Esophagus muscularis mucosa (tissue), 4 donors: ENCODE measurements at regions of chr3 and their contacts with region 1.

Region 1: DNA sequence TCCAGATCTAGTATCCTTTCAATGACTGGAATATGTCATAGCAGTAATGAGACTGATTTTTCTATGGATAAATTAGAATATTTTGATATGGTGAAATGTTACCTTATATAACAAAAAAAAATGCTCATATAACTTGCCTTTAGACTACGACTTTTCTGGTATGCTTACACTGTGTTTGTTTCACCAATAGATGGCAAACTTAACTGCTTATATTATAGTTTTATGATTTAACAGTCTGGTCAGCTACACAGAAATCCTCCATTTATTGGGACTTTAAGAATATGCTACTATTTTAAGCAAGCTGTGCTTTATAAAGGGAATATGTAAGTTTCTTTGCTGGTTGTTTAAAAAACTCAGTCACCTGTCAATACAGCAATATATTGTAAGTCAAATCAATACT is 205.6 kb downstream of the VGLL3 start:
- DNase-seq: no peak
- H3K4me3 ChIP-seq: no peak overlapping the region
- H3K27ac ChIP-seq: no peak overlapping the region
- H3K4me1 ChIP-seq: no peaks in the 10 kb centered on the region
- H3K27me3 ChIP-seq: no peaks in the 10 kb centered on the region
- CTCF ChIP-seq: peak; percentile 18 to 36 (median 22)
- EP300 ChIP-seq: no peak
- POLR2A ChIP-seq: no peak

Region 2: DNA sequence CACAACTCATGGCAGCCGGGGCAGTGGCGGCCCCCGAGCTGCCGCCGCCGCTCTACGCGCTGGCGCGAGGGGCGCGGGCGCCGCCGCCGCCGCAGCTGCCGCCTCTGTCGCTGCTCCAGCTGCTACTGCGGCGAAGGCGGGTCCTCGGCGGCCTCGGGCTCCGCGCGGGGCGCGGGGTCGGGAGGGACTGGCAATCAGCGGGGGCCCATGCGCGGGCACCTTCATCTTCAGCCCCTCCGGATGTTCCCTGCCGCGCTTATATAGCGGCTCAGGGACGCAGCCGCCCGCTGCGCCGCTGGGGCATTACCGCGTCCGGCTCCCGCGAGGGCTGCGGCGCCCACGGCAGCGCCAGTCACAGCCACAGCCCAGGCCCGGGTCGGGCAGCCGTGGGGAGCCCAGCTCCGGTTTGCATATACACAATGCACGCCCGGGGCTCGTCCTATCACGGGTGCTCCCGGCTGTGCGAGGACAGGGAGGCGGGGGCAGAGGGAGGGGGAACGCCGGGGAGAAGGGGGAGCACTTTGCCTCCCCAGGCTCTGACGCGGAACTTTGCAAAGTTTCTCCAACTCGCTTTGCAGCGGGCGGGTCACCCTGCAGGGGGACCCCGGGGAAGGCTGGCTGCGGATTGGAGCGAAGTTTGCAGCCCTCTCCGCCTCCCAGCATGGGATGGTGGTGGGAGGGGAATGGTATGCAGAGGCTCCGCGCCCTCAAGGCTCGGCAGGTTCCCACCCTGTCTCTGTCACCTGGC is 205.5 kb after region 1 on chr3 and contains the start of gene VGLL3:
- intact Hi-C with region 1: loop called (anchors 10 kb)
- DNase-seq: no peak
- H3K4me3 ChIP-seq: peak within 1 kb of the TSS; percentile 65 to 87 (median 74)
- H3K27ac ChIP-seq: peak within 1 kb of the TSS; percentile 86 to 91 (median 88)
- H3K4me1 ChIP-seq: peaks cover 8 to 33% (median 20%) of the 10 kb centered on the region in 4 donors
- H3K27me3 ChIP-seq: peaks cover 0 to 24% (median 5%) of the 10 kb centered on the region in 4 donors
- CTCF ChIP-seq: peak in 1 of 3 experiments; percentile 14
- EP300 ChIP-seq: no peak
- POLR2A ChIP-seq: peak; percentile 40
- total RNA-seq, gene VGLL3: 23.7 to 45.6 (median 30.5) TPM

Region 3: DNA sequence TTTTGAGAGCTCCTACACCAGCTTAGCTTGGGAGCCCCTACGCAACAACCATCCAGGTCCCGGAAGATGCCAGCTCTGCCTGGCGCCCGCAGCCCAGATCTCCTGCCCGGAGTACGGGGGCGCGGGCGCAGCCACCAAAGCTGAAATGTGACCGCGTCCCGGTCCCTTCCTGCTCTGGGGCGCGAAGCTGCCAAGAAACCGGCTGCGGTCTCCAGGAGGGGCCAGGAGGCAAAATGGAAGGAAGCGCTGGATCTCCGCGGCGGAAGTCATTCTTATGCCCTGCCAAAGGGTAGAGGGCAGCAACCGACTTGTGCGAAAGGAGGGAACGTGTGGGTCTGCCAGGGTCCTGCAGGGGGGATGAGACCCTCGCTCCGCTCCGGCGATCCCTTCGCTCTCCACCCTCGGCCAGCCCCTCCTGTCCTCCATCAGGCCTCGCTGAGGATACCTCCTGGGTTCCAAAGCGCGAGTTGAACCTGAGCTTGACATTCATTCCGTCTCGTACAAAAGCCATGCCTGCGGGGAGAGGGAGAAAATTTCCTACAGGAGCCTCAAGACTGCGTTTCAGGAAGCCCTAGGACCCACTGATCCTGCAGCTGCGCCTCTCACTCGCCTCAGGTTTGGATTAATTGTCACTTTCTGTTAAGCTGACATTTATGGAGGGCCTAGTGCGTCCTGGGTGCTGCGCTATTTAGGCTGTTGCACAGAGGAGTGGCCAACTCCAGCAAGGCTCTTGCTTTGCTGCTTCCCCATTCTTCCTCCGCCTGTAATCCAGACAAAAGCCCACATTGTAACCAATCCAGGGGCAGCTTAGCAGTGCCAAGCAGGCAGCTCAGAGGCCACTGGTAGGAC is 303.8 kb after region 1 on chr3:
- intact Hi-C with region 1: loop called (anchors 5 kb)
- DNase-seq: no peak
- H3K4me3 ChIP-seq: peak overlapping the region; percentile 56 to 78 (median 66)
- H3K27ac ChIP-seq: peak overlapping the region; percentile 68 to 81 (median 77)
- H3K4me1 ChIP-seq: peaks cover 0 to 24% (median 8%) of the 10 kb centered on the region in 4 donors
- H3K27me3 ChIP-seq: no peaks in the 10 kb centered on the region
- CTCF ChIP-seq: no peak
- EP300 ChIP-seq: no peak
- POLR2A ChIP-seq: no peak